Posterior cingulate gyrus (tissue), 11 donors: ENCODE measurements at regions of chr19 and their contacts with region 1.

Region 1: DNA sequence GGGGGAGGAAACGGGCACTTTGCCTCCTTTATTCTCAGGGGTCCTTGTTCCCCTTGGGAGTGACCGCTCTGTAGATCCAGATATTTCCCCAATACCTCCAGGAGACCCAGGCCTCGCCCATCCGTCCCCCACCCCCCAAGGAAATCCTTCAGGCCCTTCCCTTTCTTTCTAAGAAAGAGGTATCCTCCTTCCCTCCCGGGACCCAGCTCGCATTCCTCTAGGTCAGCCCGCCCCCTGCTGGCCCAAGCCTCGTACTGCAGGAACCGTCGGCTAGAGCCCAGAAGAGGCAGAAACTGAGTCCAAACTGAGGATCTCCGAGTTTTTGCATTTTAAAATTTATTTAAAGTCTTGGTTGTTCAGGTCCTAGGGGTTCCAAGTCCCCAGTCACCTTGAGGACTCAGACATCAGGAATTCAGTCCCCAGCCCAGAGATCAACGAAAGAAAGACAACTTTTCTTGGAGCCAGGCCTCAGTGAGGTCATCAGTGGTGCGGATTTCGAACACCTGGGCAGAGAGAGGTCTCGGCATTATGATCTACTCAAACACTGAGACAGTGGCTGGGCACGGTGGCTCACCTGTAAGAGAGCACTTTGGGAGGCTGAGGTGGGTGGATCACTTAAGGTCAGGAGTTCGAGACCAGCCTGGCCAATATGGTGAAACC is 7.5 kb upstream of the LRFN1 start:
- DNase-seq: peak; percentile 82 to 99 (median 96)

Region 2: DNA sequence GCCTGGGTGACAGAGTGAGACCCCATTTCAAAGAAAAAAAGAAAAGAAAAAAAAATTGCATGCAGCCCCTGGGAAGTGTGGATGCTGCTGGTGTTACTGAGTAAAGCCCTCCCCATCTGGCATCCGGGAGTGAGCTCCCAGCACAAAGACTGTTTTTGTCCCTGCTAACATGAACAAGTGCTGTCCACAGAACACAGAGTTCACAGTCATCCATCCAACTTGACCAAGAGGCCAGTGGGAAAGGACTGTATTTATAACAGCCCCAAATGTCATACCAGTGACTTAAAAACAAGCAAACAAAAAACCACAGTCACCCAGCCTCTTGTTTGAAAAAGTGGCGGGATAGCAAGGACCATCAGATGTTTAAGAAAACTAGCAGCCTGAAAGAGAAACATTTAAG is 363.4 kb before region 1 on chr19:
- intact Hi-C with region 1: loop called (anchors 2 kb)
- DNase-seq: peak in 1 of 10 donors; percentile 19

Region 3: DNA sequence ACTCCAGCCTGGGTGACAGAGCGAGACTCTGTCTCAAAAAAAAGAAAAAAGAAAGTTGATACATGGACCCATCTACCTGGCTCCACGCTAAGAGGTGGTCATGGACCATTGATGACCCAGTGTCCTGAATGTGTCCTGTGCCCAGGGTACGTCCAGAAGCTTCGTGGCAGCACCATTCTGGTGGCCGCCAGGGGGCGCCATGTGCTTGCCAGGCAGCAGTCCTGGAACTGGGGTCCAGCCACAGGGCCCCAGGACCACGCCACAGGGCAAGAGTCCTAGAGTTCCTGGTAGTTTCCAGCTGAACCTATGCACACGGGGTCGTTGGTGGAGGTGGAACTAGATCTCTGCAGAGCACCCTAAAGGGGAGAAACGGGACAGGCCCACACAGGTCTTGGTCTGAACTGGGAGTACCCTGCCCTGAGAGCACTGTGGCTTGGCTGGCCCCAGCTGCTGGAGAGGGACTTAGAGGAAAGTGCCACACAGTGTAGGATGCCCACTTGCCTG is 275.9 kb before region 1 on chr19:
- intact Hi-C with region 1: loop called (anchors 5 kb)
- DNase-seq: peak; percentile 56 to 98 (median 80)

Region 4: GRCh38 chr19:39122934-39123731 is 205.0 kb before region 1 on chr19:
- intact Hi-C with region 1: loop called (anchors 1 kb)
- DNase-seq: no peak

Region 5: GRCh38 chr19:39363901-39364457 is 35.8 kb after region 1 on chr19:
- intact Hi-C with region 1: no loop called
- DNase-seq: peak; percentile 52 to 97 (median 76)